Right ventricle myocardium superior (tissue), 1 donor: ENCODE measurements at regions of chr17 and their contacts with region 1.

Region 1: DNA sequence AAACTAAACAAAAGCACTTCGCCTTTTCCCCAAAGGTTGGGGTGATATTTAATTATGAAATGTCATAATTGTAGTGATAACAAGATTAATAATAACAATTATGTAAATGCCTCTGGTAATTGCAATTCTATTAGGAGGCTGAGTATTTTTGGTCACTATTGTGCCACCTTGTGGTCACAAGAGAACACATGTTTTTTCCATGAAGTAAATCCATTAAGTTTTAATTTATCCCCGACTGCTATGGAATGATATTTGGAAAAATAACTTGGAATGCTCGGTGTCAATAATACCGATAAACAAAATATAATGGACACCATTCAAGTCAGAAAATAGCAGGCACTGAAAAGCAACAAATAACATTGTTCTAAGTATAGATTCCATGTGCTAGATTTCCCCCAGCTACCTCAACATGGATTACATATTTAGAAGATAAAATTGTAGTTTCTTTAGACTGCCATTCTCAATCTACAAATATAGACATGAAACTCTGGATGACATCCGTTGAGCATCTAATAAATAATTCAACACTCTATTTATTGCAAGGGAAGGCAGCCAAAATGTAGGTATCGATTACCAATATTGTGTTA is 25.0 kb upstream of the KCNJ2 start:
- DNase-seq: no peak
- ATAC-seq: peak; percentile 65

Region 2: DNA sequence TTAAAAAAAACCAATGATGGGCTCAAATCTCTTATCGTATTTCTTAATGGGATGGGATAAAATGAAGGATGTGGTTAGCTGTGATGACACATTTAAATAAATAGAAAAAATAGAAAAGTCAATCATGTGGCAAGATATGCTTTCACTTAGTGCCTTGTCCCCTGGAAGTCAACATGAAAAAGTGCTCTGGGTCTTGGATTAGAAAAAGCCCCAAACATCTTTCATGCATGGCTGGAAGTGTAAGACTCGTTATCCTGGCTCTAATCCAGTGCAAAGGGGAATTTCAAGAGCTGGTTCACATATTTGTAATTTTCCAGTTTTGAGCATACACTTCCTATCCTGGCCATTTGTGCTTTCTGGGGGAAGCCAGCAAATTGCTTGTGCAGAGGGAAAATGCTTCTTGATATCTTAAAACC is 569.0 kb before region 1 on chr17:
- intact Hi-C with region 1: loop called (anchors 10 kb)
- DNase-seq: no peak
- ATAC-seq: peak; percentile 45

Region 3: DNA sequence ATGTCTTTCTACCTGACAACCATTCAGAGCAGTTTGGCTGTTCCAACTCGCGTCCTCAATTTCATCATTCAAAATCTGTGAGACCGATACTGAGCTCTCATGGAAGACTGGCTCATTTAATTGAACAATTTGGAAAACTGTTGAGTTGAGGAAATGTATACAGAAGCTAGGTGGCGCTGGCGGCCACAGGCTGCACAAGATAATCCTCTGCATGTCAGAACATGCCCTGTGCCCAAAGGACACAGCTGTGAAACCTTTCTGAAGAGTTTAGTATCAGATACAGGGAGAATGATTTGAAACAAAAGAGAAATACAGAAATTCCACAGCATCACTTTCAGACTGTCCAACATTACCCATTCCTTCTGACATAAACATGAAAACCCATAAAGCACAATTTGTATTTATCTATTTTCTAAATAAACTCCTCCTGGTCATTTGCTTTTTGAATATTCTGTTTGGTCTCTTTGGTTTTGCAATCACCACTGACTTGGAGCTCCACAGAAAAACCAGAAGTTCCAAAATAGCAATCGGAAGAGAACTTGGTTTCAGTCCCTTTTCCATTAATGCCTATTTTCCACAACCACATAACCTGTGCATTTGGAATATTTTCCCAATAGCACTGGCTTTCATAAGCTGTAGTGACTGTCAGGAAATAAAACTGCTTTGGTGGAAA is 537.1 kb before region 1 on chr17:
- intact Hi-C with region 1: loop called (anchors 10 kb)
- DNase-seq: peak; percentile 85
- ATAC-seq: peak; percentile 94

Region 4: DNA sequence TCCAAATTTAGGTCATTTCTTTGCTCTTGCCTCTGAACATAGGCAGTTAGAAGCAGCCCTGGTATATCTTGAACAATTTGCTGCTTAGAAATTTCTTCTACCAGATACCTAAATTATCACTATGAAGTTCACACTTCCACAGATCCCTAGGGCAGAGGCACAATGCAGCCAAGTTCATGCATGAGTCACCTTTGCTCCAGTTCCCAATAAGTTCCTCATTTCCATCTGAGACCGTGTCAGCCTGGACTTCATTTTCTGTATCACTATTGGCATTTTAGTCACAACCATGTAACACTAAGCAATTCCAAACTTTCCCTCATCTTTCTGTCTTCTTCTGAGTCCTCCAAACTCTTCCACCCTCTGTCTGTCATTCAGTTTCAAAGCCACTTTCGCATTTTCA is 24.4 kb before region 1 on chr17:
- intact Hi-C with region 1: no loop called
- DNase-seq: no peak
- ATAC-seq: no peak